ENCODE measurements at regions of chr12 and their contacts with region 1.

Region 1: GRCh38 chr12:89856431-89856830 is 147.8 kb upstream of the ATP2B1 start:
- DNase-seq: no peak
- H3K4me3 Mint-ChIP-seq: no peak overlapping the region
- H3K27ac Mint-ChIP-seq: no peak overlapping the region
- H3K4me1 Mint-ChIP-seq: peaks cover 33% of the 10 kb centered on the region
- H3K27me3 Mint-ChIP-seq: no peaks in the 10 kb centered on the region

Region 2: DNA sequence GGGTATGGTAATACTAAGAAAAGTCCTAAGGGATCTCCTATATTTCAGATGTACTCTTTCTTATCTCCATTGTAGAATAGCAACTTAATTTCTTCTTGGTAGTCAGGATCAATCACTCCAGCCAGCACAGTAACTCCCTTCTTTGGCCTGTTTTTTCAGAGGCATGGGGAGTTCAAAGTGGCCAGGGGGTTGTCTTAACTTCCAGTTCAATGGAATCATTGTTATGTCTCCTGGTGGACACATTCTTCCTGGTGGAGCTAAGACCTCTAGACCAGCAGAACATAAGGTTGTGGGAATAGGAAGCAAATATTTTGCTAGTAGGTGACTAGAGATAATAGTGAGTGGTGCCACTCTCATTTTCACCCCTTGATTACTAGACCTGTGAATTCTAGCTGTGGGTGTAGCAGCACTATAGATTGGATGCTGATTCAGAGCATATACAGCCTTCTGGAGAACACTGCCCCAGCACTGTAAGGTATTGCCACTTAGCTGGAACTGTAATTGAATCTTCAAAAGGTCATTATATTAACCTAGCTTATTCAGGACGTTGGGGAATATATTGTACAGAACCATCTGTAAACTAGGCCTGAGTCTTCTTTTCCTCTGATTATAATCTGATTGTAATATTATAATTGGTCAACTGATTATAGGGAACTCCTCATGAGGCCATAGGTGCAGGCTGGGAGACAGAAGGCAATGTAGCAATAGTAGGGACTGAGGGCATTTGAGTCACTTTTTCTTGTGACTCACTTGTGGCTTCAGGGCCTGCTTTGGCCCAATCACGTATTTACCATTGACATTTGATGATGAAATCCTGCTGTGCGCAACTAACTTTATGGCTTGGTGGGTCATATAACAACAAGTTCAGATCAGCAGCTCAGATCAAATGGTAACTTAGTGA is 87.6 kb before region 1 on chr12:
- intact Hi-C with region 1: loop called (anchors 1 kb)
- DNase-seq: no peak
- H3K4me3 Mint-ChIP-seq: no peak overlapping the region
- H3K27ac Mint-ChIP-seq: peak overlapping the region; percentile 49
- H3K4me1 Mint-ChIP-seq: peaks cover 28% of the 10 kb centered on the region
- H3K27me3 Mint-ChIP-seq: no peaks in the 10 kb centered on the region

Region 3: DNA sequence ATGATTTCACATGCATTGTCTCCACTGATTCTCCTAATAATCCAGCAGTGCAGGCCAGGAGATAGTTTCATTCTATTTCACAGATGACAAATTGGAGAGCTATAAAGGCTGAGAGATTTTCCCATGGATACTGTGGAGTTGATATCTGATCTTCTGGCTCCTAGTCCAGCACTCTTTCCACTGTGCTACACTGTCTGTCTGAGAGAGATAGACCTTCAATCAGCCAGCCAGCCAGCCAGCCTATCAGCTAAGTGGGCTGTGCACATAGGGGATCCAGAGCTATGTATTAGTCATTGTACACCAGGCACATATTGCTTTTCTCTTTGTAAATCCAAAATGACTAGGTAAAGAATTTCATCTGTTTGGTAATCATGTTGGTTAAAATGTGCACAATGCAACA is 56.0 kb before region 1 on chr12:
- intact Hi-C with region 1: no loop called
- DNase-seq: no peak
- H3K4me3 Mint-ChIP-seq: no peak overlapping the region
- H3K27ac Mint-ChIP-seq: no peak overlapping the region
- H3K4me1 Mint-ChIP-seq: no peaks in the 10 kb centered on the region
- H3K27me3 Mint-ChIP-seq: no peaks in the 10 kb centered on the region

Region 4: GRCh38 chr12:89889051-89889450 is 32.6 kb after region 1 on chr12:
- intact Hi-C with region 1: loop called (anchors 5 kb)
- DNase-seq: no peak
- H3K4me3 Mint-ChIP-seq: no peak overlapping the region
- H3K27ac Mint-ChIP-seq: no peak overlapping the region
- H3K4me1 Mint-ChIP-seq: peaks cover 1% of the 10 kb centered on the region
- H3K27me3 Mint-ChIP-seq: peaks cover 16% of the 10 kb centered on the region

Measured in activated T-helper 2 cell treated with anti-CD3 and anti-CD28 coated beads, Interferon-gamma antibody, Interleukin-2, Interleukin-4, amounts not matched to agents 10 μg/mL and 5 μg/mL and 100 μg/mL, durations not matched to agents 14 hours and 24 hours and 36 hours (primary cell).